ENCODE measurements at regions of chr3 and their contacts with region 1.

Region 1: GRCh38 chr3:71069797-71070196 is 513.7 kb downstream of the FOXP1 start:
- DNase-seq: peak; percentile 56 to 75
- ATAC-seq: peak; percentile 45 to 70 (median 58)
- H3K4me3 ChIP-seq: no peak overlapping the region
- H3K27ac ChIP-seq: peak overlapping the region in 4 of 10 donors; percentile 15 to 50 (median 20)
- H3K4me1 ChIP-seq: peaks cover 5 to 64% (median 51%) of the 10 kb centered on the region in 9 donors
- H3K27me3 ChIP-seq: no peaks in the 10 kb centered on the region
- CTCF ChIP-seq: peak; percentile 29 to 74 (median 62)

Region 2: DNA sequence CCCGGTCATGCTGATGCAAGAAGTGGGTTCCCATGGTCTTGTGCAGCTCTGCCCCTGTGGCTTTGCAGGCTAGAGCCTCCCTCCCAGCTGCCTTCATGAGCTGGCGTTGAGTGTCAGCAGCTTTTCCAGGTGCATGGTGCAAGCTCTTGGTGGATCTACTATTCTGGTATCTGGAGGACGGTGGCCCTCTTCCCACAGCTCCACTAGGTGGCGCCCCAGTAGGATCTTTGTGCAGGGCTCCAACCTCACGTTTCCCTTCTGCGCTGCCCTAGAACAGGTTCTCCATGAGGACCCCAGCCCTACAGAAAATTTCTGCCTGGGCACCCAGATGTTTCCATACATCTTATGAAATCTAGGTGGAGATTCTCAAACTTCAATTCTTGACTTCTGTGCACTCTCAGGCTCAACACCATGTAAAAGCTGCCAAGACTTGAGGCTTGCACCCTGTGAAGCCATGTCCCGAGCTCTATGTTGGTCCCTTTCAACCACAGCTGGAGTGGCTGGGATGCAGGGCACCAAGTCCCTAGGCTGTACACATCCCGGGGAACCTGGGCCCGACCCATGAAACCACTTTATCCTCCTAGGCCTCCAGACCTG is 519.0 kb before region 1 on chr3:
- intact Hi-C with region 1: loop called in 2 of 10 experiments (anchors 5 to 10 kb)
- DNase-seq: peak; percentile 65 to 72
- ATAC-seq: peak; percentile 76 to 92 (median 82)
- H3K4me3 ChIP-seq: no peak overlapping the region
- H3K27ac ChIP-seq: no peak overlapping the region
- H3K4me1 ChIP-seq: no peaks in the 10 kb centered on the region
- H3K27me3 ChIP-seq: no peaks in the 10 kb centered on the region
- CTCF ChIP-seq: peak; percentile 67 to 86 (median 81)

Region 3: DNA sequence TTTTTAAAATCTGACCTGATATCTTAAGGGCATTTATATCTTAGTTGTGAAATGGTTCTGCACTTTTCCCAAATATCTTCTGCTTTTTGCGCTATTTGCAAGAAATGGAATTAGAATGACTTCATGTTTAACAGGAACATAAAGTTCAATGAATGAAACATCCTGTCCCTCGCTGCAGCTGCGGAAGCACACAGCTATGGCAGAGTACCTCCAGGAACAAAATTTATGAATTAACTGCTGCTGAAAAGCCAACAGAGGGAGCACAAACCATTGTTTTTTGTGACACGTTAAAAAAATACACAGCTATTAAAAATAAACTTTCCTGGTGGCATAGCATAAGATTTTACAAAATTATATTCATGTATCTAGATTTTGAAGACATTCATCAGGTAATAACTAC is 353.0 kb before region 1 on chr3:
- intact Hi-C with region 1: loop called in 7 of 10 experiments (anchors 5 to 10 kb)
- DNase-seq: peak; percentile 14 to 32
- ATAC-seq: peak in 5 of 8 donors; percentile 49 to 88 (median 62)
- H3K4me3 ChIP-seq: no peak overlapping the region
- H3K27ac ChIP-seq: no peak overlapping the region
- H3K4me1 ChIP-seq: no peaks in the 10 kb centered on the region
- H3K27me3 ChIP-seq: no peaks in the 10 kb centered on the region
- CTCF ChIP-seq: peak; percentile 17 to 72 (median 54)

Region 4: DNA sequence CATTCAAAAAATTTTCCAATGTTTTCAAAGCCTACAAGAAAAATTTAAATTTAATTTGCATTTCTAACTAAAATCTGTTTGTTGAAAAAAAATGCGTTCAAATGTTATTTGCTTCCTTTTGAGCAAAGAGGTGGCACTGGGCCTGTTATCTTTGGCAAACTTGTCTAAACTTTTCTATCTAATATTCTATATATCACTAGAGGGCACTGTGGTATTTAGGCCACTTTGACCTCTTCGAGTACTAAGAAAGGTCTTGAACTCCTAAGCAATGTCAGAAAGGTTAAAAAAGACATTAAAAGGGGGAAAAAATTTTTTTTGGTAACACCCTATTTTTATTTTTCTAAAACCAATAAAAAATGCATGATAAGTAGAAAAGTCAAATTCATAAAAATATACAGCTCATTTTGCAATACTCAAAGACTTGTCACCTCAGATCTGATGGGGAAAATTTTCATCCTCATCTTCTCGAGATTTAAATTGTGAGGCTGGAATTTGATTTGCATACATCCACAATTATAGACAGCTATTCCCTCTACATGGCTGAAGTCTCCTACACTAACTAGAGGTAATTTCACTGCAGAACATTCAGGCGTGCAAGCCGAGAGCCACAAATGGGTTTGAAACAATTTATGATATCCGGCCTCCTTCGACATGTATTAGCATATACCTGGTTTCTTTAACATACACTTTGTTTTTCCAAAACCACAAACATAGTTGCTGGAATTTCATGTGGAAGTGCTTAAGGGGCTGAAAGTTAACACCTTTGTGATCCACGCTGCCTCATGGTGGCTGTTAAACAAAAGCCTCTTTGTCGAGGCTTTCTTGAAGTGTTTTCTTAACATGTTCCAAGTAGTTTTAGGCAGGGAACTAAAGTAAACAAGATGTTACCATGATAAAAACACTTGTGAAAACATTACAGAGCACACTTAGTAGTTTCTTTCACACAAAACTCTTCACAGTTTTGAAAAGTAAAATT is 62.7 kb before region 1 on chr3:
- intact Hi-C with region 1: loop called in 6 of 10 experiments (anchors 2 to 10 kb)
- DNase-seq: no peak
- ATAC-seq: peak in 7 of 8 donors; percentile 48 to 82 (median 66)
- H3K4me3 ChIP-seq: no peak overlapping the region
- H3K27ac ChIP-seq: peak overlapping the region in 8 of 10 donors; percentile 16 to 59 (median 40)
- H3K4me1 ChIP-seq: peaks cover 3 to 86% (median 55%) of the 10 kb centered on the region in 9 donors
- H3K27me3 ChIP-seq: no peaks in the 10 kb centered on the region
- CTCF ChIP-seq: peak; percentile 10 to 76 (median 58)

Region 5: GRCh38 chr3:71109241-71109976 is 39.6 kb after region 1 on chr3:
- intact Hi-C with region 1: loop called in 1 of 10 experiments (anchors 5 kb)
- DNase-seq: no peak
- ATAC-seq: peak in 5 of 8 donors; percentile 24 to 37 (median 29)
- H3K4me3 ChIP-seq: no peak overlapping the region
- H3K27ac ChIP-seq: peak overlapping the region in 4 of 10 donors; percentile 6 to 44 (median 38)
- H3K4me1 ChIP-seq: peaks cover 0 to 74% (median 45%) of the 10 kb centered on the region in 9 donors
- H3K27me3 ChIP-seq: no peaks in the 10 kb centered on the region
- CTCF ChIP-seq: no peak

Measured in heart right ventricle (tissue), 16 donors.